PC-9 (cell line): ENCODE measurements at regions of chr17 and their contacts with region 1.

Region 1: GRCh38 chr17:44733753-44734152 is 25.0 kb upstream of the ADAM11 start:
- DNase-seq: no peak
- H3K4me3 ChIP-seq: no peak overlapping the region
- H3K27ac ChIP-seq: no peak overlapping the region
- H3K4me1 ChIP-seq: no peaks in the 10 kb centered on the region
- H3K27me3 ChIP-seq: no peaks in the 10 kb centered on the region
- CTCF ChIP-seq: peak; percentile 42; the same call in 1 of the 2 replicates

Region 2: GRCh38 chr17:44006598-44007345 is 727.0 kb before region 1 on chr17:
- CTCF ChIA-PET with region 1: no interaction called
- POLR2A ChIA-PET with region 1: interaction called, 11 read pairs
- intact Hi-C with region 1: no loop called
- DNase-seq: peak; percentile 88 to 93
- H3K4me3 ChIP-seq: peak overlapping the region; percentile 52
- H3K27ac ChIP-seq: 0 out of 2 replicates have a peak overlapping the region, but pooled peaks have one; percentile 3
- H3K4me1 ChIP-seq: peaks cover 12% of the 10 kb centered on the region
- H3K27me3 ChIP-seq: no peaks in the 10 kb centered on the region
- CTCF ChIP-seq: no peak; the same call in 1 of the 2 replicates

Region 3: DNA sequence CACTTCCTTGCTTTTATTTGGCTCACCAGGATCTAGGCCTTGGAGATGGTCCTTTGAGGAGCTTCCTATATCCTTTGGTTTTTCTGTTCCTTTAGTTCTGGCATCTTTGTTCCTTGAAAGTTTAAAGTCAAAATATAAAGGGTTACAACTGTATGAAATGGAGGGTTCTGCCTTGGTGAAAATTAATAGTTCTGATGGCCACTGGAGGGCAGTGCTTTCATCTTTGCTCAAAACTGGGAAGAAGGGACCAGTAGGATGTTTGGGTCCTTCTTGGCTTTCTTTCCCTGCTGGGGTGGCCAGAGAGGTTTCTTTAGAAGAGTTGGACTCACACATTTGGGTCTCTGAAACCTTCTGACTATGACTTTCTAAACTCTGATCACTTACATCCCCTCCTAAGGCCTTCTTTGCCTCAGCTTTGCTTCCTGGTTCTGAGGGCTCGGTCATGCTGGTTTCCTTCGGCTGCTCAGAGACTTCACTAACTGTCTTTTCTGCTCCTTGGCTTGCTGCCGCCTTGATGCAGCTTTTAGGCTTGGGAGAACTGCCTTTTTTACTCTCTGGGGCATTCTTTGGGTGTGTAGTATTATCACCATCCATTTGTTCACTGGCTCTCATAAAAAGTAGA is 333.4 kb before region 1 on chr17:
- CTCF ChIA-PET with region 1: no interaction called
- POLR2A ChIA-PET with region 1: interaction called, 40 read pairs
- intact Hi-C with region 1: no loop called
- DNase-seq: no peak
- H3K4me3 ChIP-seq: no peak overlapping the region
- H3K27ac ChIP-seq: no peak overlapping the region
- H3K4me1 ChIP-seq: no peaks in the 10 kb centered on the region
- H3K27me3 ChIP-seq: no peaks in the 10 kb centered on the region
- CTCF ChIP-seq: peak; percentile 72